Naive thymus-derived CD4-positive, alpha-beta T cell (primary cell): ENCODE measurements at regions of chr4 and their contacts with region 1.

Region 1: DNA sequence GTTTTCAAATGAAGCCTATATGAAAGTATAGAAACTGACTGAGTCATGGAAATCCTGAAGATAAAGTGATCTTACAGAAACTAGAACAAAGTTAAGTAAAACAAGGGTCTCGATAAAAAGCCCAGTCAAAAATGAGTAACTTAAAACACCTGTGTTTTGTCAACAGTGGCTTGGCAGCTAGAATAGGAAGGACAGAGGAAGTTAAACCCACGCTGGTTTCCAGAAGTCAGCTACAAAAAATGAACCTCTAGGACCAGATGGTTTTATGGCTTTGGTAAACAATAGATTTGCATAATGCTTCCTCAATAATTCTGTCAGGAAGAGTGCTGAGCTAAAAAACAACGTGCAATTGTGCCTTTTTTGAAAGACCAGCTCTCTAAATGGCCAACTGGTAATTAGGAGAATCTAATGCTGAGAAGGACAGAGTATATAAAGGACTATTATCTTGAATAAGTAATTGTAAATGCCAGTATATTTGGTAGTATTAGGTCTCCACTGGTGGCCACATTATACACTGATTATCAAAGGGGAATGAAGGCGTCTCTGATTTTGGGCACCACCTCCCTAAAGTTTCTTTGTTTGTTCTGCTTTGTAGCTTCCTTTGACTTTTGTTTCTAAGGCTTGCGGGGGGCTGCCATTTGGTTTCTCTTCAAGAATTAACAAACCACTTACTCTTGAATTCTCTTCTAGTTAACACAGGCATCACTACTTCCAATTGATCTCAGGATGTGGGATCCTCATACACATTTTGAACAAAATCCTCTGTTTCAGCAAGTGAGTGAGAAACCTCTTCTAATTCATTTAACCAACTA is 72.2 kb upstream of the PPP3CA start:
- DNase-seq: peak in 5 of 9 donors; percentile 7 to 26 (median 24)
- ATAC-seq: no peak
- H3K4me3 ChIP-seq: no peak overlapping the region
- H3K4me3 Mint-ChIP-seq: peak overlapping the region in 6 of 10 donors; percentile 1 to 70 (median 12)
- H3K27ac ChIP-seq: no peak overlapping the region
- H3K27ac Mint-ChIP-seq: peak overlapping the region in 2 of 9 donors; percentile 41 to 65
- H3K4me1 ChIP-seq: peaks cover 33 to 36% of the 10 kb centered on the region in 2 donors
- H3K4me1 Mint-ChIP-seq: peaks cover 26 to 53% (median 39%) of the 10 kb centered on the region in 7 donors
- H3K27me3 ChIP-seq: peaks cover 0 to 11% of the 10 kb centered on the region in 2 donors
- H3K27me3 Mint-ChIP-seq: peaks cover 32 to 62% (median 41%) of the 10 kb centered on the region in 5 donors

Region 2: GRCh38 chr4:101205916-101206315 is 213.6 kb before region 1 on chr4:
- CTCF ChIA-PET with region 1: no interaction called
- POLR2A ChIA-PET with region 1: no interaction called
- intact Hi-C with region 1: loop called in 1 of 2 experiments (anchors 2 kb)
- DNase-seq: peak in 7 of 9 donors; percentile 10 to 44 (median 18)
- ATAC-seq: peak; percentile 96
- H3K4me3 ChIP-seq: no peak overlapping the region
- H3K4me3 Mint-ChIP-seq: peak overlapping the region in 9 of 10 donors; percentile 3 to 76 (median 55)
- H3K27ac ChIP-seq: no peak overlapping the region
- H3K27ac Mint-ChIP-seq: peak overlapping the region in 4 of 9 donors; percentile 13 to 83 (median 46)
- H3K4me1 ChIP-seq: peaks cover 12 to 17% of the 10 kb centered on the region in 2 donors
- H3K4me1 Mint-ChIP-seq: peaks cover 25 to 52% (median 34%) of the 10 kb centered on the region in 7 donors
- H3K27me3 ChIP-seq: no peaks in the 10 kb centered on the region
- H3K27me3 Mint-ChIP-seq: peaks cover 0 to 3% (median 0%) of the 10 kb centered on the region in 5 donors

Region 3: GRCh38 chr4:101400096-101400495 is 19.4 kb before region 1 on chr4:
- CTCF ChIA-PET with region 1: no interaction called
- POLR2A ChIA-PET with region 1: no interaction called
- intact Hi-C with region 1: loop called in 1 of 2 experiments (anchors 1 kb)
- DNase-seq: peak in 1 of 9 donors; percentile 32
- ATAC-seq: no peak
- H3K4me3 ChIP-seq: no peak overlapping the region
- H3K4me3 Mint-ChIP-seq: peak overlapping the region in 1 of 10 donors; percentile 46
- H3K27ac ChIP-seq: no peak overlapping the region
- H3K27ac Mint-ChIP-seq: peak overlapping the region in 1 of 9 donors; percentile 65
- H3K4me1 ChIP-seq: no peaks in the 10 kb centered on the region
- H3K4me1 Mint-ChIP-seq: peaks cover 0 to 17% (median 0%) of the 10 kb centered on the region in 7 donors
- H3K27me3 ChIP-seq: no peaks in the 10 kb centered on the region
- H3K27me3 Mint-ChIP-seq: peaks cover 4 to 21% (median 9%) of the 10 kb centered on the region in 5 donors

Region 4: DNA sequence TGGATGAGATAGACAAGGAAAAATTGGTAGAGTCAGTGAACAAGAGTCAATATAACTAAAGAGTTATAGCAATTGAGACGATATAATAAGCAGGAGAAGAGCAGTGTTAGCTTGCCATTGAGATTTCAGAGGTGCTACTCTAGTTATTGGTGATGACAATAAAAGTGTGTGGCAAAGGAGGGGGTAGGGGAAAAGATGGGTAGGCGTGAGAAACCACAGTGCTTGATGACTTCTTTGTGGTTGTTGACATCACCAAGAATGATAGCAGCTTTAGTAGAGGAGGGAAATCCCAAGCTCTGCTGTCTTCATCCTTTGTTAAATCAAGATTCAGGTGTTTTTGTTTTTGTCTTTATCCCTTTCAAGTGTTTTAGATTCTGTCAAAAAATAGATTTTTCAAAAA is 107.7 kb after region 1 on chr4:
- CTCF ChIA-PET with region 1: no interaction called
- POLR2A ChIA-PET with region 1: no interaction called
- intact Hi-C with region 1: loop called (anchors 1 to 5 kb)
- DNase-seq: peak in 8 of 9 donors; percentile 44 to 73 (median 62)
- ATAC-seq: peak; percentile 98
- H3K4me3 ChIP-seq: no peak overlapping the region
- H3K4me3 Mint-ChIP-seq: peak overlapping the region in 3 of 10 donors; percentile 7 to 13 (median 9)
- H3K27ac ChIP-seq: no peak overlapping the region
- H3K27ac Mint-ChIP-seq: peak overlapping the region in 3 of 9 donors; percentile 1 to 51 (median 3)
- H3K4me1 ChIP-seq: peaks cover 0 to 11% of the 10 kb centered on the region in 2 donors
- H3K4me1 Mint-ChIP-seq: peaks cover 0 to 22% (median 12%) of the 10 kb centered on the region in 7 donors
- H3K27me3 ChIP-seq: no peaks in the 10 kb centered on the region
- H3K27me3 Mint-ChIP-seq: peaks cover 10 to 51% (median 32%) of the 10 kb centered on the region in 5 donors